ENCODE measurements at regions of chr1 and their contacts with region 1.

Region 1: GRCh38 chr1:6489799-6490180 is 1.7 kb downstream of the PLEKHG5 start:
- DNase-seq: peak; percentile 93
- H3K4me3 ChIP-seq: peak overlapping the region; percentile 46 to 76 (median 56)
- H3K27ac ChIP-seq: peak overlapping the region; percentile 44 to 86 (median 81)
- H3K4me1 ChIP-seq: peaks cover 17 to 100% (median 68%) of the 10 kb centered on the region in 6 donors
- H3K27me3 ChIP-seq: peaks cover 0 to 44% (median 19%) of the 10 kb centered on the region in 7 donors
- CTCF ChIP-seq: peak; percentile 68 to 98 (median 94)
- POLR2A ChIP-seq: no peak

Region 2: DNA sequence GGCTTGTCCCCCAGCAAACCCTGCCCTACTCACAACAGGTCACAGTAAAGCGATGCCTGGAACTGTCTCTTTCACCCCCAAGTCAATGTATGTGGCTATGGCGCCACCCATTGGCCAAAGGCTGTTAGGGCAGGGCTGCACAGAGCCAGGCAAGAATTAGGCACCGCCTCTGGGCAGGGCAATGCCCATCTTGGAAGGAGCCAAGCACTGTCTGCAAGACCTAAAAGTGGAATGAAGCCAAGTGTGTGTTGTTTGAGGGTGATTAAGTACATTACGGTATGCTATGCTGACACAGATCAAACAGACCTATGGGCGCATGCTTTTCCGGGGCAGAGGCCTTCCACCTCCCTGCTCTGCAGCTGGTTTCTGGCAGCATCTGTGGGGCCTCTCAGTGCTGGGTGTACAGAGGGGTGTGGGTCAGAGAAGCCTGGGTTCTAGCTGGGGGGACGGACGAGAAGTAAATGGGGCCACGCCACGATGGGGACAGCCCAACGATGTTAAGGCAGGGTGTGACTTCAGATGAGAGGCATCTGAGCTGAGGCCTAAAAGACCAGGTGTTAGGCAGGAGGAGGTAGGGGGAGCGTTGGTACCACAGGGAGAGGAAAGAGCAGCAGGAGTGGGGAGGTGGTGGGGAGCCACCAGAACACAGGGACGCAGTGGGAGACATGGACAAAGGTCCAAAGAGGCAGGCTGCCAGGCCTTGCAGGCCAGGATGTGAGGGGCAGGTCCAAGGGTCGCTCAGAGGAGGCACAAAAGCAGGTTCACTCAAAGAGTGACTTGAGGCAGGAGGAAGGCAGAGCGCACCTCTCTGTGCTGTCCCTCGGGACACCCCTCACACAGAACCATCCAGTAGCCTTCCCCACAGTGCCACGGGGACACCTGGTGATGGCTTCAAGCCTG is 146.0 kb before region 1 on chr1:
- intact Hi-C with region 1: no loop called
- DNase-seq: no peak
- H3K4me3 ChIP-seq: no peak overlapping the region
- H3K27ac ChIP-seq: no peak overlapping the region
- H3K4me1 ChIP-seq: peaks cover 4 to 29% (median 14%) of the 10 kb centered on the region in 6 donors
- H3K27me3 ChIP-seq: no peaks in the 10 kb centered on the region
- CTCF ChIP-seq: peak; percentile 63 to 84 (median 78)
- POLR2A ChIP-seq: no peak

Region 3: GRCh38 chr1:6547301-6547700 is 57.5 kb after region 1 on chr1:
- intact Hi-C with region 1: loop called (anchors 5 kb)
- DNase-seq: no peak
- H3K4me3 ChIP-seq: no peak overlapping the region
- H3K27ac ChIP-seq: peak overlapping the region in 6 of 8 donors; percentile 49 to 83 (median 80)
- H3K4me1 ChIP-seq: peaks cover 6 to 54% (median 33%) of the 10 kb centered on the region in 6 donors
- H3K27me3 ChIP-seq: no peaks in the 10 kb centered on the region
- CTCF ChIP-seq: peak in 3 of 11 experiments; percentile 15 to 50 (median 27)
- POLR2A ChIP-seq: no peak

Region 4: GRCh38 chr1:6646499-6647148 is 156.8 kb after region 1 on chr1:
- intact Hi-C with region 1: loop called (anchors 5 kb)
- DNase-seq: no peak
- H3K4me3 ChIP-seq: no peak overlapping the region
- H3K27ac ChIP-seq: no peak overlapping the region
- H3K4me1 ChIP-seq: peaks cover 0 to 8% (median 0%) of the 10 kb centered on the region in 6 donors
- H3K27me3 ChIP-seq: no peaks in the 10 kb centered on the region
- CTCF ChIP-seq: peak in 9 of 11 experiments; percentile 47 to 69 (median 57)
- POLR2A ChIP-seq: no peak

Measured in spleen (tissue), 13 donors.